ENCODE measurements at regions of chr7 and their contacts with region 1.

Region 1: DNA sequence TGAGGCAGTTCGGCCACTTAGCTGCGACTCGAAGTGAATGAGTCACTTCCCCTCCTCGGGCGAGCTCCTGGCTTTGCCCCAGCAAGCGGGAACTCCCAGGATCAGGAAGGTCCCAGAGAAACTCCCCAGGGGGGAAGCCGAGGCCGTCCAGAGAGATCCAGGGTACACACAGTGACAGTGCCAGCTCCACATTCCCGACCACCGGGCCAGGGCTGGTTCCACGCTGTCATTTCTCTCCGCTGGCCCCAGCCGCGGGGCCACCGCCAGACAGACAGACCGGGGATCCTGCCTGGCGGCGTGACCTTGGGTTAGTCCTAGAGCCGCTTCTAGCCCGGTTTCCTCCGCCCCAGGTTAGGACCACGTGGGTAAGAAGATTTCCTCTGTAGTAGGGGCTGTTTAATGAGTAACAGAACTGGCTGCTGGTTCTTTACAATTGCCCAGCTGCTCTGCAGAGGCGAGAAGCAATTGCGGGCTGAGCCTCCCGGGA is 463 bp upstream of the UPP1 start:
- DNase-seq: no peak
- H3K4me3 Mint-ChIP-seq: peak overlapping the region; percentile 87
- H3K27ac Mint-ChIP-seq: peak overlapping the region; percentile 95
- H3K4me1 Mint-ChIP-seq: peaks cover 80% of the 10 kb centered on the region
- H3K27me3 Mint-ChIP-seq: no peaks in the 10 kb centered on the region

Region 2: DNA sequence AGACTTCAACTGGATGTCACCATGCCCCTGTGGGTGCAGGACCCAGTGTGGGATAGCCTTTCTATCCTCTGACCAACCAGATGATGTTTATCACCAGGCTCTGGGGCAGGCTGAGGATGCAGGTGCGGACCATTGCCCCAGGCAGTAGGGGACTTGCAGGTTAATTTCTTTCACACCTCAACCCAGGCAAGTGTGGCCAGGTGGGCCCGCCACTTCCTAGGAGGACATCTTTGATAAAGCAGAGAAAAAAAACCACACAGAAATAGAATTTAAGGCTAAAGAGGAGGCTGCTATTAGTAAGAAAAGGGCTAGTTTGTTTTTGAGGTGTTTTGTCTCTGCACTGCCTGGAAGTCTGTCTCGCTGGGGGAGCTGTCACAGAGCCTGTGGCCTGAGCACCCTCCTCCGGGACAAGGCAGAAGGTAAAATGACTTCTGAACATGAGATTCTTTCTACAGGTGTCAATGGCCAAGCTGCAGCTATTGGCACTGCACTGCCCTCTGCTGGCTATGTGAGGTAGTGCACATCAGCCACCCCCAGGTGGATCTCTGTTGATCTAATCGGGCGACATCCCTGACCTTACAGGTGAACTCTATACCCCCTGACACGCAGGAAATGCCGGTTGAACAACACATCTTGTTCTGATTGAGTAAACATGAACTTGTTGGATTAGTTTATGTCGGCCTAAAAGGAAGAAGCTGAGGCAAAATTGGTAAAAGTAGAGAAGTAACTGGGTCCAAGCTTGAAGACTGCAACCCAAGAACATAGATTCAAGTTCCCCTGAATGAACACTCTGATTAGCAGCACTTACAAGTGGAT is 21.5 kb after region 1 on chr7:
- CTCF ChIA-PET with region 1: interaction called, 5 read pairs
- POLR2A ChIA-PET with region 1: interaction called, 165 read pairs
- DNase-seq: peak; percentile 90
- H3K4me3 Mint-ChIP-seq: no peak overlapping the region
- H3K27ac Mint-ChIP-seq: peak overlapping the region; percentile 52
- H3K4me1 Mint-ChIP-seq: peaks cover 14% of the 10 kb centered on the region
- H3K27me3 Mint-ChIP-seq: no peaks in the 10 kb centered on the region